CD8-positive, alpha-beta T cell (primary cell): ENCODE measurements at regions of chr22 and their contacts with region 1.

Region 1: GRCh38 chr22:40076702-40077645 is 82.2 kb downstream of the FAM83F start:
- DNase-seq: no peak
- ATAC-seq: peak; percentile 40
- H3K4me3 ChIP-seq: no peak overlapping the region
- H3K4me3 Mint-ChIP-seq: peak overlapping the region; percentile 35
- H3K27ac ChIP-seq: no peak overlapping the region
- H3K27ac Mint-ChIP-seq: peak overlapping the region; percentile 77
- H3K4me1 ChIP-seq: peaks cover 60% of the 10 kb centered on the region
- H3K4me1 Mint-ChIP-seq: peaks cover 58% of the 10 kb centered on the region
- H3K27me3 ChIP-seq: no peaks in the 10 kb centered on the region
- H3K27me3 Mint-ChIP-seq: no peaks in the 10 kb centered on the region
- CTCF ChIP-seq: no peak

Region 2: GRCh38 chr22:38181453-38182247 is 1895.3 kb before region 1 on chr22 and contains the start of gene PLA2G6:
- CTCF ChIA-PET with region 1: no interaction called
- POLR2A ChIA-PET with region 1: no interaction called
- intact Hi-C with region 1: no loop called
- DNase-seq: peak; percentile 92 to 98 (median 96)
- ATAC-seq: peak; percentile 87
- H3K4me3 ChIP-seq: peak within 1 kb of the TSS; percentile 69 to 92
- H3K4me3 Mint-ChIP-seq: peak within 1 kb of the TSS; percentile 93
- H3K27ac ChIP-seq: peak within 1 kb of the TSS; percentile 18 to 90
- H3K27ac Mint-ChIP-seq: peak within 1 kb of the TSS; percentile 88
- H3K4me1 ChIP-seq: peaks cover 25% of the 10 kb centered on the region
- H3K4me1 Mint-ChIP-seq: peaks cover 49% of the 10 kb centered on the region
- H3K27me3 ChIP-seq: no peaks in the 10 kb centered on the region
- H3K27me3 Mint-ChIP-seq: no peaks in the 10 kb centered on the region
- CTCF ChIP-seq: no peak
- total RNA-seq, gene PLA2G6: 35.4 to 44.4 TPM

Region 3: GRCh38 chr22:39703928-39704639 is 372.9 kb before region 1 on chr22:
- CTCF ChIA-PET with region 1: no interaction called
- POLR2A ChIA-PET with region 1: no interaction called
- intact Hi-C with region 1: no loop called
- DNase-seq: no peak
- ATAC-seq: no peak
- H3K4me3 ChIP-seq: no peak overlapping the region
- H3K4me3 Mint-ChIP-seq: no peak overlapping the region
- H3K27ac ChIP-seq: no peak overlapping the region
- H3K27ac Mint-ChIP-seq: no peak overlapping the region
- H3K4me1 ChIP-seq: no peaks in the 10 kb centered on the region
- H3K4me1 Mint-ChIP-seq: no peaks in the 10 kb centered on the region
- H3K27me3 ChIP-seq: no peaks in the 10 kb centered on the region
- H3K27me3 Mint-ChIP-seq: no peaks in the 10 kb centered on the region
- CTCF ChIP-seq: no peak

Region 4: GRCh38 chr22:40094485-40094884 is 17.5 kb after region 1 on chr22:
- CTCF ChIA-PET with region 1: no interaction called
- POLR2A ChIA-PET with region 1: no interaction called
- intact Hi-C with region 1: loop called in 1 of 2 experiments (anchors 2 kb)
- DNase-seq: peak in 1 of 9 experiments; percentile 42
- ATAC-seq: peak; percentile 26
- H3K4me3 ChIP-seq: no peak overlapping the region
- H3K4me3 Mint-ChIP-seq: peak overlapping the region; percentile 30
- H3K27ac ChIP-seq: peak overlapping the region in 1 of 2 experiments; percentile 44
- H3K27ac Mint-ChIP-seq: no peak overlapping the region
- H3K4me1 ChIP-seq: peaks cover 57% of the 10 kb centered on the region
- H3K4me1 Mint-ChIP-seq: peaks cover 77% of the 10 kb centered on the region
- H3K27me3 ChIP-seq: no peaks in the 10 kb centered on the region
- H3K27me3 Mint-ChIP-seq: no peaks in the 10 kb centered on the region
- CTCF ChIP-seq: no peak